GM12878 (cell line): ENCODE measurements at regions of chr5 and their contacts with region 1.

Region 1: GRCh38 chr5:91383027-91383955 is at the start of gene ARRDC3:
- DNase-seq: peak; percentile 82
- ATAC-seq: peak; percentile 69
- H3K4me3 ChIP-seq: peak within 1 kb of the TSS; percentile 95
- H3K27ac ChIP-seq: peak within 1 kb of the TSS; percentile 100
- H3K4me1 ChIP-seq: peaks cover 8% of the 10 kb centered on the region; the same call in 1 of the 2 replicates
- H3K27me3 ChIP-seq: no peaks in the 10 kb centered on the region
- CTCF ChIP-seq: no peak
- EP300 ChIP-seq: no peak
- POLR2A ChIP-seq: peak; percentile 98
- RAD21 ChIP-seq: no peak
- polyA plus RNA-seq, gene ARRDC3: 2.3 to 7.0 TPM

Region 2: DNA sequence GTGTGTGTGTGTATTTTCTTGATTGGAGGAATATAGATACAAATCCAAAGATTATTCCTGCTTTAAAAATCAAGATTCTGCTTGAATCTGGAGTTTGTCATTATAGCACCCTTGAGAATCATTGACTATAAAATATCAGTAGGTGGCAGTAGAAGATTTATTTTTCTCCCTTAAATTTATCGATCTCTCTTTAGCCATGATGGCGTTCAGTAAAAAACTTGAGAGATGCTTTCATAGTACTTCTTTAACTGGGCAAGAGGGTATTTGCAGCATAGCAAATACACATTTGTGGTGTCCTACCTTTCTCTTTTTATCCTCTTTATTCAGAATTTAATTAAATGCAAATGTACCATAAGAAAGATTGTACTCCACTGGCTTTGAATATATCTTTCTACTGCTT is 517.0 kb before region 1 on chr5:
- CTCF ChIA-PET with region 1: interaction called, 62 read pairs
- POLR2A ChIA-PET with region 1: interaction called, 4 read pairs
- RAD21 ChIA-PET with region 1: interaction called, 9 read pairs
- SMC1A ChIA-PET with region 1: interaction called, 21 read pairs
- in situ Hi-C with region 1: no loop called
- intact Hi-C with region 1: loop called (anchors 10 kb)
- DNase-seq: no peak
- ATAC-seq: peak; percentile 67
- H3K4me3 ChIP-seq: no peak overlapping the region
- H3K27ac ChIP-seq: no peak overlapping the region
- H3K4me1 ChIP-seq: no peaks in the 10 kb centered on the region
- H3K27me3 ChIP-seq: no peaks in the 10 kb centered on the region
- CTCF ChIP-seq: peak in 2 of 3 experiments; percentile 23 to 44; a peak in 3 of 6 replicates
- EP300 ChIP-seq: no peak
- POLR2A ChIP-seq: no peak
- RAD21 ChIP-seq: peak; percentile 55; the same call in 1 of the 2 replicates

Region 3: GRCh38 chr5:91101600-91102379 is 281.5 kb before region 1 on chr5:
- CTCF ChIA-PET with region 1: interaction called, 69 read pairs
- POLR2A ChIA-PET with region 1: interaction called, 5 read pairs
- RAD21 ChIA-PET with region 1: interaction called, 20 read pairs
- SMC1A ChIA-PET with region 1: interaction called, 60 read pairs
- in situ Hi-C with region 1: loop called (anchors 5 kb)
- intact Hi-C with region 1: loop called (anchors 1 kb)
- DNase-seq: peak; percentile 21
- ATAC-seq: peak; percentile 99
- H3K4me3 ChIP-seq: no peak overlapping the region
- H3K27ac ChIP-seq: no peak overlapping the region
- H3K4me1 ChIP-seq: no peaks in the 10 kb centered on the region
- H3K27me3 ChIP-seq: no peaks in the 10 kb centered on the region
- CTCF ChIP-seq: peak; percentile 63 to 84 (median 70); a peak in 5 of 6 replicates
- EP300 ChIP-seq: no peak
- POLR2A ChIP-seq: no peak
- RAD21 ChIP-seq: peak; percentile 92

Region 4: DNA sequence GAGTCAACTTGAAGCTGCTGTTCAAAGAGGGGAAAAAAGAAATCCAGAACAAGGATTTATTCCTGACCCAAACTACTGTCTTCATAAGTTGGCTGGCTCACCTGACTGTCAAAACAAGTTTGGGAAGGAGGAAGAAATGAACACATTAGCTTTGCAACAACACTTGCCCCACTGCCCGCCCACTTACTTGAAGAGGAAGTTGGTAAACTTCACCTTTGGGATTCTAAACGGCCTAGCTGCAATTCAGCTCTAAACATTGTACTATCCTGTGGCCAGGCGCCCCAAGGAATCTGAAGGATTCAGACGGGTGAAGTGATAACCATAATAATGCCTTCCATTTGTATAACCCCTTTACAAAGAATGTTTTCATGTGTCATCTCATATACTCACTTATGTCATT is 199.6 kb before region 1 on chr5:
- CTCF ChIA-PET with region 1: interaction called, 15 read pairs
- POLR2A ChIA-PET with region 1: no interaction called
- RAD21 ChIA-PET with region 1: interaction called, 23 read pairs
- SMC1A ChIA-PET with region 1: interaction called, 37 read pairs
- in situ Hi-C with region 1: no loop called
- intact Hi-C with region 1: no loop called
- DNase-seq: no peak
- ATAC-seq: no peak
- H3K4me3 ChIP-seq: no peak overlapping the region
- H3K27ac ChIP-seq: no peak overlapping the region
- H3K4me1 ChIP-seq: peaks cover 5% of the 10 kb centered on the region; the same call in 1 of the 2 replicates
- H3K27me3 ChIP-seq: no peaks in the 10 kb centered on the region
- CTCF ChIP-seq: no peak
- EP300 ChIP-seq: no peak
- POLR2A ChIP-seq: no peak
- RAD21 ChIP-seq: no peak

Region 5: DNA sequence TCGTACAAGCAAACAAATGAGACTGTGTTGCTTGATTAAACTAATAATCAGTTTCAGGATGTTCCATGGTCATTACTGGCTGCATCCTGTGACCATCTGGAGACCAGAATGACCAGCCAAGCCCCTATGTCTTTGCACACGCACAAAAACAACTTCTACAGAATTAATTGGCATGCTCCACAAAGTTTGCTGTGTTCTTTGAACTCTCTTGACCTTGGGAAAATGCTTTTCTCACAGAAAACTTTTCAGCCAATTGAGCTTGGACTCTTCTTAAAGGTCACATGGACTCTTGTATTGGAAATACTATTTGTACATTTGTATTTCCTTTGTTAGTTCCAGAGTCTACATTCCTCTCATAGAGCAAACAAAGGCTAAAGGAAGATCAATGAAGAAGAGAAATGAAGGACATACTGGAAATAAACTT is 148.0 kb before region 1 on chr5:
- CTCF ChIA-PET with region 1: interaction called, 7 read pairs
- POLR2A ChIA-PET with region 1: no interaction called
- RAD21 ChIA-PET with region 1: interaction called, 14 read pairs
- SMC1A ChIA-PET with region 1: interaction called, 9 read pairs
- in situ Hi-C with region 1: no loop called
- intact Hi-C with region 1: no loop called
- DNase-seq: no peak
- ATAC-seq: no peak
- H3K4me3 ChIP-seq: no peak overlapping the region
- H3K27ac ChIP-seq: no peak overlapping the region
- H3K4me1 ChIP-seq: no peaks in the 10 kb centered on the region
- H3K27me3 ChIP-seq: no peaks in the 10 kb centered on the region
- CTCF ChIP-seq: no peak
- EP300 ChIP-seq: no peak
- POLR2A ChIP-seq: no peak
- RAD21 ChIP-seq: no peak

Region 6: DNA sequence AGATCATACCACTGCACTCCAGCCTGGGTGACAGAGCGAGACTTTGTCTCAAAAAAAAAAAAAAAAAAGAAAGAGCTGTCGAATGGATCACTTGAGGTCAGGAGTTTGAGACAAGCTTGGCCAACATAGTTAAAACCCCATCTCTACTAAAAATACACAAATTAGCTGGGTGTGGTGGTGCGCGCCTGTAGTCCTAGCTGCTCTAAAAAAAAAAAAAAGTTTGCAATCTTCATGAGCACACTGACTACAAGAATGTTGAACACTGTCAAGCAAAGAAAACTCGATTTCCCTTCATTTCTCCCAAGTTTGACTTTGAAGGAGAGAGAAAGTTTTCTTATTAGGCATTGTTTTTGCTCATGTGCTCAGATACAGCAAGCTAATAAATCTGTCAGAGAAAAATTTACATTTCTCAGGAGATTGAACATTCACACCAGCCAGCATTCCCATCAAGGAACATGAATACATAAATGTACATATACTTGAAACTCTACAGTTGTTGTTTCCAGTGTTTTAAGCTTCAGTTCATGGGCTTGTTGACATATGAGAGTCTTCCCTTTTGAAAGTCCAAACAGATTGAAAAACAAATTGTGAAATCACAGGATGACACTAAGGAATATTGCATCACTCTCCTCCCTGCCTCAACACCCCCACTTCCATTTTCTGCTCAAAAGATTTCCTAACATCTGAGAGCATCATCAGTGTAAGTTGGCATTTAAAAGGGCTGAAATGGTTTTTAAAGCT is 82.0 kb before region 1 on chr5:
- CTCF ChIA-PET with region 1: interaction called, 7 read pairs
- POLR2A ChIA-PET with region 1: no interaction called
- RAD21 ChIA-PET with region 1: no interaction called
- SMC1A ChIA-PET with region 1: interaction called, 10 read pairs
- in situ Hi-C with region 1: no loop called
- intact Hi-C with region 1: no loop called
- DNase-seq: no peak
- ATAC-seq: no peak
- H3K4me3 ChIP-seq: no peak overlapping the region
- H3K27ac ChIP-seq: no peak overlapping the region
- H3K4me1 ChIP-seq: no peaks in the 10 kb centered on the region
- H3K27me3 ChIP-seq: peaks cover 0 to 3% of the 10 kb centered on the region in 2 experiments; a peak in 1 of 4 replicates
- CTCF ChIP-seq: no peak
- EP300 ChIP-seq: no peak
- POLR2A ChIP-seq: no peak
- RAD21 ChIP-seq: no peak

Region 7: DNA sequence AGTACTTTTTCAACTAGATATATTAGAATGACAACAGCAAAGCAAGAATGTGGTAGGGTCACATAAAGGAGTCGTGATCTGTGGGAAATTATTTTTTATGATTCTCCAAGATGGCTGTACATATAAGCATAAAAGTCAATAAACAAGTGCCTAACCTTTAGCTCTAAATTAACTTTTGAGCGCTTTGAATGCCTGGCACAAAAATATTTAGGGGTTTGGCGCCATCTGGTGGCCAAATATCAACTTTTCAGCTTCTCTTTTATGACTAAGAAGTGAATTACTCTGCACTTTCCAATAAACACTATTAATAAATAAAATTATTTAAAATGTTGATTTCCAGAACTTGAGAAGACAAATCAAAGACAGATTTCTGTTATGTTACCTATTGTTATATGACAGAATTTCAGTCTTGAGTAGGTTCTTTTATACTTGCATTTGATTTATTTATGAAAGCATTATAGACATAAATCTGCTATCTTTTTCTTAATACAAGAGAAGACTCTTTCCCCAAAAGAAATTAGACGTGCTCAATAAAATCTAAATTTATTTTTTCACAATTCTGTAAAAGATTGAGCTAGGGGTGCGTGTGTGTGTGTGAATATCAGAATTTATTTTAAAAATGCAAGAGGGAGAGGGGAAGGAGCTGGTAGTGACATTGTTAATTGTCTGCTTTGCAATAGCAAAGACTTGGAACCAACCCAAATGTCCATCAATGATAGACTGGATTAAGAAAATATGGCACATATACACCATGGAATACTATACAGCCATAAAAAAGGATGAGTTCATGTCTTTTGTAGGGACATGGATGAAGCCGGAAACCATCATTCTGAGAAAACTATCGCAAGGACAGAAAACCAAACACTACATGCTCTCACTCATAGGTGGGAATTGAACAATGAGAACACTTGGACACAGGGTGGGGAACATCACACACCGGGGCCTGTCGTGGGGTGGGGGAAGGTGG is 36.6 kb after region 1 on chr5:
- CTCF ChIA-PET with region 1: interaction called, 199 read pairs
- POLR2A ChIA-PET with region 1: interaction called, 11 read pairs
- RAD21 ChIA-PET with region 1: interaction called, 109 read pairs
- SMC1A ChIA-PET with region 1: interaction called, 107 read pairs
- in situ Hi-C with region 1: no loop called
- intact Hi-C with region 1: no loop called
- DNase-seq: no peak
- ATAC-seq: peak; percentile 71
- H3K4me3 ChIP-seq: no peak overlapping the region
- H3K27ac ChIP-seq: no peak overlapping the region
- H3K4me1 ChIP-seq: no peaks in the 10 kb centered on the region
- H3K27me3 ChIP-seq: no peaks in the 10 kb centered on the region
- CTCF ChIP-seq: peak; percentile 29 to 60 (median 51); a peak in 5 of 6 replicates
- EP300 ChIP-seq: no peak
- POLR2A ChIP-seq: no peak
- RAD21 ChIP-seq: peak; percentile 76